A673 (cell line): ENCODE measurements at regions of chr9 and their contacts with region 1.

Region 1: DNA sequence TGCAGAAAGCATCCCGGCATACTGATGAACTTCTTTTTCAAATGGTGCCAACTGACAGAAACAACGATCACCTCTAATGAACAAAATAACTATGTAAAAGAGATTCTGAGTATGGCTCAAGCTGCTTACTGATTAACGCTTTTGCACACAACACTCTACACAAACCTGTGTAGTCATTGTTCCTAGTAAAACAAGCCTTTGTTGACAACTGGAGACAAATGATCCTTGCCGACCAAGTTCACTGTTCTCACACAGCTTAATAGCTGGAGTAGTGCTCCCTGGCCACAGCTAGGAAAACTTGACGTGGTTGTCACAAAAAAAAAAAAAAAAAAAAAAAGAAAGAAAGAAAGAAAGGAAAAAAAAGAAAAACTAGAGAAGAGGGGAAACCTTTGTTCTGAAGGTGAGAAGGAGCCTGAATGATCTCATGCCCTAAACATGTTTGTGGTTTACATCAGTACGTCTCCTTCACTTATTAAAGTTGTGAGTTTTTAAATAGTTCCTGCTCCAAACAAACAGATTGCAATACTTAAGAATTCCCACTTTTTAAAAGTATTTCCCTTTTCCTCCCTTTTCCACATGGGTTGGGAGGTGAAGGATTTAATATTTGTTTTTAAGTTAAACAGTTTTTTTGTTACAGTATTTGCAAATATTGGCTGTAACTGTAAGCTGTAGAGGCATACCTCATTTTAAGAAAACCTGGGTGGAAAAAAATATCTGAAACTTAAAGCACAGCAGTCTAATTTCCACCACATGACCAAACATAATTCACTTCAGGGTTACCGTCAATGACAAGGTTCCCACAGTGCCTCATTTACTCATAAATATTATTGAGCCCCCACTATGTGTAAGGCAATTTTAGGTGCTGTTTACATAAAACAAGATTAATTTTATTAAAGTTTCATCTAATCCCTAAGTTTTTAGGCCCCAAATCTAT is 63.7 kb downstream of the GLIS3 start:
- DNase-seq: no peak
- H3K4me3 ChIP-seq: no peak overlapping the region
- H3K27ac ChIP-seq: no peak overlapping the region
- H3K4me1 ChIP-seq: no peaks in the 10 kb centered on the region
- H3K27me3 ChIP-seq: no peaks in the 10 kb centered on the region
- CTCF ChIP-seq: no peak

Region 2: DNA sequence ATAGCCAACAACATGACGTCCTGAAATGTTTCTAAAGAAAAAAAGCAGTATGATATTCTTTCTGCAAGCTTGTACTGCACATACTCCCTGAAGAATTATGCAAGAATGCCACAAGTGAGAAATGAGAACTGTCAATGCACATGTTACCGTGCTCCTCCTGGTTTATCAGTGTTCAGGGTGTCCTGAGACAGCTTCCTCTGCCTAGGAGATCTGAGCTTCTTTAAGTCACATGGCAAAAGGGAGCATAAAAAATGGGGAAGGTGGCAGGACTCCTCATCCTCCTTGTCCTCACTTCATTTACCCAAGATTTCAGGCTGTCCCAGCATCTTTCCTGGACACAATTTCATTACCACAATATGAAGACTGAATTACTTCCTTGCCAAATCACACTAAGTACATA is 174.4 kb before region 1 on chr9:
- CTCF ChIA-PET with region 1: interaction called, 10 read pairs
- POLR2A ChIA-PET with region 1: no interaction called
- intact Hi-C with region 1: no loop called
- DNase-seq: no peak
- H3K4me3 ChIP-seq: no peak overlapping the region
- H3K27ac ChIP-seq: no peak overlapping the region
- H3K4me1 ChIP-seq: no peaks in the 10 kb centered on the region
- H3K27me3 ChIP-seq: no peaks in the 10 kb centered on the region
- CTCF ChIP-seq: no peak